T-cell (primary cell): ENCODE measurements at regions of chr5 and their contacts with region 1.

Region 1: GRCh38 chr5:134314443-134314842 is 52.5 kb downstream of the CDKL3 start:
- DNase-seq: no peak
- ATAC-seq: no peak
- H3K4me3 ChIP-seq: no peak overlapping the region
- H3K4me3 Mint-ChIP-seq: no peak overlapping the region
- H3K27ac ChIP-seq: no peak overlapping the region
- H3K27ac Mint-ChIP-seq: no peak overlapping the region
- H3K4me1 ChIP-seq: no peaks in the 10 kb centered on the region
- H3K4me1 Mint-ChIP-seq: no peaks in the 10 kb centered on the region
- H3K27me3 ChIP-seq: no peaks in the 10 kb centered on the region
- H3K27me3 Mint-ChIP-seq: no peaks in the 10 kb centered on the region

Region 2: GRCh38 chr5:134380346-134380745 is 65.9 kb after region 1 on chr5:
- CTCF ChIA-PET with region 1: no interaction called
- POLR2A ChIA-PET with region 1: interaction called, 5 to 13 read pairs
- DNase-seq: peak in 2 of 35 experiments; percentile 32 to 35
- ATAC-seq: peak in 2 of 4 experiments; percentile 26 to 71
- H3K4me3 ChIP-seq: no peak overlapping the region
- H3K4me3 Mint-ChIP-seq: peak overlapping the region in 2 of 3 donors; percentile 24 to 62
- H3K27ac ChIP-seq: no peak overlapping the region
- H3K27ac Mint-ChIP-seq: peak overlapping the region; percentile 17 to 42
- H3K4me1 ChIP-seq: peaks cover 12 to 14% of the 10 kb centered on the region in 2 experiments
- H3K4me1 Mint-ChIP-seq: peaks cover 44 to 53% (median 51%) of the 10 kb centered on the region in 3 donors
- H3K27me3 ChIP-seq: no peaks in the 10 kb centered on the region
- H3K27me3 Mint-ChIP-seq: no peaks in the 10 kb centered on the region